Posterior vena cava (tissue), 2 donors: ENCODE measurements at regions of chr6 and their contacts with region 1.

Region 1: DNA sequence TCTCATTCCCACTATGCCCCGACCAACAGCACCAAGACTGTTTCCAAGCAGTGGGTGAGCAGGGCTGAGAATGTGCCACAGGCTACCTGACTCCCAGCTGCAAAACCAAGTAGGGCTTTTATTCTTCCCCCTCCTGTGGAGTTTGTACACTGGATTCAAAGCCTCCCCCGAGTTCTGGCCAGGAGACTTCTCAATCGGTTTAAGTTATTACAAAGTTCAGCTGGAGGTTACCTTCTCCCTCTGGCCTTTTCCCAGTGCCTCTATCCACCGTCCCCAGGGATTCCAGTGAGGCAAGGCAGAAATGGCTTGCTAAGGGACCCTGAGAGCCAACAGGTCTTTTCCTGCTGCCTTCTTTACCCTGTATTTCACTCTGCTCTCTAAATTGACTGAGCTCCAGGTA is 217.0 kb downstream of the ADGRG6 start:
- DNase-seq: no peak

Region 2: DNA sequence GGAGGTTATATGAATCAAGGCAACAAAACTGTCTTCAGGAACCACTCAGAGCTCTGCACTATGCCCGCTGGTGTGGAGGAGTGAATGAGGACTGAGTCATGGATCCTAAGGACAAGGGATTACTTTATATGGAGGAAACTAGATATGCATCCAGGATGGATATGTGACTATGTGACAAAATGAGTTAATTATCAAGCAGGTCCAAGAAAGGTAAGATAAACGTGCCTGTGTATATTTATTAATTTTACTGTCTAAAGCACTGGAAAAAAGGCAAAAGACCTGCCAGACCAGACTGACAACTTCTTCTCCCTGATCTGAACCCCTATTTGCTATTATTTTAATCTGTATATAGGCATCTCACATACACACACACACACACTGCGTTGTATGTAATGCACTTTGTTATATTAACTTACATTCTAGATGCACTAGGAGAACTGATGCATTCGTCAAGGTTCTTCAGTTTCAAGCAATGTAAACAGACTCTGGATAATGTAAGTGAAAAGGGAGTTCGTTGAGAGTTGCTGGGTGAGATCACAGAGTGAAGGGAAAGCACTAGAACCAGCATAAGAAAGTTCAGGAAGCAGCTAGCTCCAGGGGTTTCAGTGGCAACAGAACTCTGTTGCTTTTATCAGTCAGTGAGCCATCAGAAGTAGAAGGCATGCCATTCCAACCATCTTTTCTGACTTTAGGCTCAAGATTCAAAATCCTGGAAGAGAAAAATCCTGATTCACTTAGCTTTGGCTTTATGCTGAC is 243.3 kb before region 1 on chr6:
- intact Hi-C with region 1: no loop called
- DNase-seq: no peak

Region 3: DNA sequence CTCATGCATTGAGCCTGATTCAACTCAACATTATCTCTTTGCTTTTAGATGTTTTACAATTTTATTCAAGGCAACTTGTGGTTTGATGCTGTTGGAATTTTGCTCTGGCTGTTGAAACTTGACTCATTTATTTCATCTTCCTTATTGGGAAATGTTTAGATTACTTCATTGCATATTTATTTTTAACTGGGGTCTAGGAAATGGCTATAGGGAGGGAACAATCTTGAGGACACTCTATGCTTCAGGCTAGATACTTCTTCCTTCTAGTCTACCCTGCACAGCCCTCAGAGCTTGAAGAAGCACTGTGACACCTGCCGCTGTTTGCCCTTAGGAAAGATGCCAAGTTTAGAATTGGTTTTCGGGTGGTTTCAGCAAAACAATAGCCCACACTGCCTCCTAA is 33.5 kb before region 1 on chr6:
- intact Hi-C with region 1: loop called in 1 of 2 experiments (anchors 1 kb)
- DNase-seq: no peak